ENCODE measurements at regions of chr9 and their contacts with region 1.

Region 1: GRCh38 chr9:107749787-107750444 is 260.3 kb upstream of the KLF4 start:
- DNase-seq: peak; percentile 92

Region 2: GRCh38 chr9:107576962-107577776 is 172.7 kb before region 1 on chr9:
- intact Hi-C with region 1: no loop called
- DNase-seq: no peak

Region 3: DNA sequence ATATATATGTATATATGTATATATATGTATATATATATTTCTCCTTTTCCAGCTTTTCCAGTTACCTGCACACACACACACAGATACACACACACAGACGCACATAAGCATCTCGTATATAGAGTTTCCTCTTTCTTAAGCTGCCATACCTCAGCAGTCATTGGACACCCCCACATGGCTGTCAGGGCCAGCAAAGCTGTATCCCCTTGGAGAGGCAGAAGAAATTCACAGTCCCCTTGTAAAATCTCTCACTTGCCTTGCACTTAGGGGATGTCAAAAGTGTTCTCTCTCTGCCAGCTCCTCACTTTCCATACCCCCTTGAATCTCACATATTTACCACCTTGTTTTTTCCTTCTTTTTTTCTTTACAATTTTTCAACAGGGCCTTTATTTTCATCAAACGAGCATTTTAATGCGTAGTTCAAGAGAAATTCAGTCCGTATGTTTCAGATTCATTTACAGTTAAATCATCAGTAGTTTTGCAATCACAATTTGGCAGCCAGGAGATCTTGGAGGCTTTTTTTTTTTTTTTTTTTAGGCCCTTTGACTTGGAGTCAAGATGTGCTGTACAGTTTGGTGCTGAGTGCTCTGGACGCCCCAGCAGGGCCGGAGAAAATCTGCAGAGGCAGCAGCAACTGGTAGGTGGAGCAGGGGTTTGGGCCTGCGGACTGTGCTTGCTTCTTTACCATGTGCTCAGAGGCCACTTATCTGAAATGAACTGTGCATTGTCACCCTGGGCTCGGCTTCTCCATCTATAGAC is 15.5 kb before region 1 on chr9:
- intact Hi-C with region 1: loop called (anchors 2 kb)
- DNase-seq: no peak